ENCODE measurements at regions of chr6 and their contacts with region 1.

Region 1: GRCh38 chr6:141244366-141244765 is 888.4 kb upstream of the GJE1 start:
- DNase-seq: no peak
- ATAC-seq: no peak
- H3K4me3 ChIP-seq: no peak overlapping the region
- H3K27ac ChIP-seq: no peak overlapping the region
- H3K4me1 ChIP-seq: no peaks in the 10 kb centered on the region
- H3K27me3 ChIP-seq: no peaks in the 10 kb centered on the region
- CTCF ChIP-seq: no peak

Region 2: GRCh38 chr6:141017941-141018340 is 226.4 kb before region 1 on chr6:
- intact Hi-C with region 1: no loop called
- DNase-seq: no peak
- ATAC-seq: no peak
- H3K4me3 ChIP-seq: no peak overlapping the region
- H3K27ac ChIP-seq: no peak overlapping the region
- H3K4me1 ChIP-seq: no peaks in the 10 kb centered on the region
- H3K27me3 ChIP-seq: no peaks in the 10 kb centered on the region
- CTCF ChIP-seq: no peak

Region 3: GRCh38 chr6:141174932-141175331 is 69.4 kb before region 1 on chr6:
- intact Hi-C with region 1: no loop called
- DNase-seq: no peak
- ATAC-seq: no peak
- H3K4me3 ChIP-seq: no peak overlapping the region
- H3K27ac ChIP-seq: no peak overlapping the region
- H3K4me1 ChIP-seq: no peaks in the 10 kb centered on the region
- H3K27me3 ChIP-seq: no peaks in the 10 kb centered on the region
- CTCF ChIP-seq: no peak

Region 4: DNA sequence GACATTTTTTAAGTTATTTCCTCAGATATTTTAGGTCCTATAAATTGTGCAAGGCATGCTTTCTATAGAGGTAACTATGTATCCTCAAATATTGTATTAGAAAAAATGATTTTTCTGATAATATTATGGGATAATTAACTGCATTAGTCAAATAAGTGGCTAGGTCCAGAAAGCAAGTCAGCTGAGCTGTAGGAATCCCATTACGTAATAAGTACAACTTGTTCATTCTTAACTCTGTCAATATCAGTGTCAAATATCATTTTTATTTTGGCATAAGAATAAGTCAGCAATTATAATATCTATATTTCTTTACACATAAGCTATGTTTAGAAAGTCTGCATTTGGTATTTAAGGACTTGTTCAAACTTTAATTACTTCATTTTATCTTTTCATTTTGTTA is 57.4 kb after region 1 on chr6:
- intact Hi-C with region 1: loop called in 1 of 10 experiments (anchors 5 kb)
- DNase-seq: no peak
- ATAC-seq: no peak
- H3K4me3 ChIP-seq: no peak overlapping the region
- H3K27ac ChIP-seq: no peak overlapping the region
- H3K4me1 ChIP-seq: peaks cover 0 to 5% (median 0%) of the 10 kb centered on the region in 9 donors
- H3K27me3 ChIP-seq: no peaks in the 10 kb centered on the region
- CTCF ChIP-seq: no peak

Region 5: DNA sequence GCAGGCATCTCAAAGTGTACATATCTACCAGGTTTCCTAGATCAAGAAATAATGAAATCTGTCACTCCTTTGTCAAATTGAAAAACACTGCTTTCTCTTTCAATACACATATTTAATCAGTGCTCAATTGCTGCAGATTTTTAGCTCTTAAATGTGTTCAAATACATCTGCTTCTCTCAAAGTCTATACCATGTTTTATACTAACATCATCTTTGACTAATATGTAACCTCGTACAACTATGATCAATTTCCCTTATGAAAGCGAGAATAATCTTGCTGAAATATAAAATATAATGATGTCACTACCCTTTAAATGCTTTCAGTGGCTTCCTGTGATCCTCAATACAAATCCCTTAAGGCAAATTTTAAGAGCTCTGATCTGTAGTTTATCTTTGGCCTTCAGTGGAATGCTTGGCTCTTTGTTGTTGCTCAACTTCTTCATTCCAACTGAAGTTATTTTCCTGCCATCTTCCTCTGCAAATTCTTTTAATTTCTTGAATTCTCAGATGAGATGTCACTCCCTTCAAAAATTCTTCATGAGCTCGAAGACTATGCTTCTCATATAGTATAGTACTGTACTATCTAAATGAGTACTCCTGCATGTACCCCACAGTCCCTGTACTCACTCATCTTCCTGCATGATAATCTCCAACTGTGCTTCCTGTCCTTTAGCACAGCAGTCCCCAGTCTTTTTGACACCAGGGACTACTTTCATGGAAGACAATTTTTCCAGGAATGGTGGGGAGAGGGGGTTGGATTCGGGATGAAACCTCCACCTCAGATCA is 343.3 kb after region 1 on chr6:
- intact Hi-C with region 1: no loop called
- DNase-seq: no peak
- ATAC-seq: no peak
- H3K4me3 ChIP-seq: no peak overlapping the region
- H3K27ac ChIP-seq: no peak overlapping the region
- H3K4me1 ChIP-seq: no peaks in the 10 kb centered on the region
- H3K27me3 ChIP-seq: no peaks in the 10 kb centered on the region
- CTCF ChIP-seq: no peak

Measured in heart right ventricle (tissue), 16 donors.